Tibial artery (tissue), 4 donors: ENCODE measurements at regions of chr19 and their contacts with region 1.

Region 1: GRCh38 chr19:2371656-2372055 is 11.6 kb downstream of the TMPRSS9 start:
- DNase-seq: no peak
- H3K4me3 ChIP-seq: no peak overlapping the region
- H3K27ac ChIP-seq: no peak overlapping the region
- H3K4me1 ChIP-seq: no peaks in the 10 kb centered on the region
- H3K27me3 ChIP-seq: peaks cover 0 to 66% of the 10 kb centered on the region in 2 donors
- CTCF ChIP-seq: no peak

Region 2: DNA sequence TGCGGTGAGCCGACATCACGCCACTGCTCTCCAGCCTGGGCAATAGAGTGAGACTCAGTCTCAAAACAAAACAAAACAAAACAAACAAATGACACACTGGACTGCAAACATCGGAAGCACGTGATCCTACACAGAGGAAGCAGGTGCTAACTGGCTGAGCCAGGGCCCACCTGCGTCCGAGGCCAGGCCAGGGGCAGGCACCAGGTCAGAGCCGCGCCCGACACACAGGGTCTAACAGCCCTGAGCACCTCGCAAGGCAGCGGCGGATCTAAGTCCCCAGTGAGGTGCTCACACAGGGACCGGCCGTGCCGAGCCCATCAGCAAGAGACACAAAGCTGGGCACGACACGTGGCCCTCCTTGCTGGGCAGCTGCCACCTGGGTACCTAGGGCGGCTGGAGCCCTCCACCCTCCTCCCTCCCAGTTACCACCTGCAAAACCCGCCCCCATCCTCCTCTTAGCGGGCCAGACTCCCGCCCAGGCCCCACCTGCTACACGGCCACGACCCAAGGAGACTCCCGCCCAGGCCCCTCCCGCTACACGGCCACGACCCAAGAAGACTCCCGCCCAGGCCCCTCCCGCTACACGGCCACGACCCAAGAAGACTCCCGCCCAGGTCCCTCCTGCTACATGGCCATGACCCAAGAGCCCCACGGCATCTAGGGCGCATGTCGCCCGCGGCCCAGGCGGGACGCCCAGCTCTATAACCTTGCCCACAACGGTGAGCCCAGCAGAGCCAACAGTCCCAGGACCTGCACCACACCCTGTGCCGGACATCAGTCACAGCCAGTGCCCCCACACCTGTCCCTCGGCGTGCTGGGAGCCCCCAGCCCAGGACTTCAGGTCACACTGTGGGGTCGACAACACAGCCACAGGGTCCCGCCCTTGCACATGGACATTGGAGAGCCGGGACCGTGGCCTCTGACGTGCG is 235.9 kb before region 1 on chr19:
- intact Hi-C with region 1: loop called (anchors 10 kb)
- DNase-seq: no peak
- H3K4me3 ChIP-seq: no peak overlapping the region
- H3K27ac ChIP-seq: no peak overlapping the region
- H3K4me1 ChIP-seq: peaks cover 0 to 8% (median 0%) of the 10 kb centered on the region in 4 donors
- H3K27me3 ChIP-seq: no peaks in the 10 kb centered on the region
- CTCF ChIP-seq: no peak